Esophagus muscularis mucosa (tissue), 4 donors: ENCODE measurements at regions of chr7 and their contacts with region 1.

Region 1: DNA sequence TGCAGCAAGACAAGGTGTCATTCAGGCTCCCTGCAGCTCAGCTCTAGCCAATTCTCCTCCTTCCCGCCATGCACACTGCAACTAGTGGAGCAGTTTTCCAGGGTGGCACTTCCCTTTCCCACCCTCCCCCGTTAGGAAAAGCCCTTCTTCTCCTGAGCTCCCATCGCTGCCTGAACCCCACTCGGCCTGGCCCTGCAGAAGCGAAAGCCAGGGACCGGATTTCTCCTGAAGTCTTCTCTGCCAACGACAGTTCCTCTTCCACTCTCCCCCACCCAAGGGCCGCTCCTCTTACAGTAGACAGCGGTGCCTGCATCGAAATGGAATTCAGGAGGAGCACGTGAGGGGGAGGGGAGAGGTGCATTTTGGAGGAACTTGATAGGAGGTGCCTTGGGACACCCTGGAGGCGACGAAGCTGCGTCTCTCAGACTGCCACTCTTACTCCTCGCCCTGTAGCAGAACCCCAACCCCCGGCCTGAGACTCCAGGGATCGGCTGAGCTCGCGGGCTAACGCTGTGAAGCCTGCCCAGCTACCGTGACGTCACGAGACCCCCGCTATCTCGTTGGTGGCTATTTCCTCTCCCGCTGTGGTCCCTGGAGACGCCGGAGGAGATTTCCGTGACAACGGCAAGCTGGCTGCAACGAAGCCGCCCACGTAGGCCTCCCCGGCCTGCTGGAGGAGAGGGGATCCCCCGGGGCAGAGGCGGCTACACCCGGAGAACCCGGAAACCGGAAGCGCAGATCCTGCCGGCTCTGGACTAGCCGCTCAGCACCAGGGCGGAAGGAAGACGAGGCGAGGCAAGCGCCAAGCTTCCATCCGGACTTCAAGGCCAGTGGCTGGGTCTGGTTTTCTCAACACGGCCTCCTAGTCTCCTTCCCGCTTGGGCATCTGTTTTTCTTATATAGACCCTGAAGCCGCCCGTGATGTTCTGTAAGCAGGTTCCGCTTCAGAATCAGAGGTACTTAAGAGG is 109.7 kb downstream of the RALA start:
- DNase-seq: peak; percentile 97
- H3K4me3 ChIP-seq: peak overlapping the region; percentile 50 to 75 (median 68)
- H3K27ac ChIP-seq: peak overlapping the region; percentile 68 to 75 (median 71)
- H3K4me1 ChIP-seq: peaks cover 21 to 34% (median 26%) of the 10 kb centered on the region in 4 donors
- H3K27me3 ChIP-seq: no peaks in the 10 kb centered on the region
- CTCF ChIP-seq: no peak
- EP300 ChIP-seq: no peak
- POLR2A ChIP-seq: no peak

Region 2: DNA sequence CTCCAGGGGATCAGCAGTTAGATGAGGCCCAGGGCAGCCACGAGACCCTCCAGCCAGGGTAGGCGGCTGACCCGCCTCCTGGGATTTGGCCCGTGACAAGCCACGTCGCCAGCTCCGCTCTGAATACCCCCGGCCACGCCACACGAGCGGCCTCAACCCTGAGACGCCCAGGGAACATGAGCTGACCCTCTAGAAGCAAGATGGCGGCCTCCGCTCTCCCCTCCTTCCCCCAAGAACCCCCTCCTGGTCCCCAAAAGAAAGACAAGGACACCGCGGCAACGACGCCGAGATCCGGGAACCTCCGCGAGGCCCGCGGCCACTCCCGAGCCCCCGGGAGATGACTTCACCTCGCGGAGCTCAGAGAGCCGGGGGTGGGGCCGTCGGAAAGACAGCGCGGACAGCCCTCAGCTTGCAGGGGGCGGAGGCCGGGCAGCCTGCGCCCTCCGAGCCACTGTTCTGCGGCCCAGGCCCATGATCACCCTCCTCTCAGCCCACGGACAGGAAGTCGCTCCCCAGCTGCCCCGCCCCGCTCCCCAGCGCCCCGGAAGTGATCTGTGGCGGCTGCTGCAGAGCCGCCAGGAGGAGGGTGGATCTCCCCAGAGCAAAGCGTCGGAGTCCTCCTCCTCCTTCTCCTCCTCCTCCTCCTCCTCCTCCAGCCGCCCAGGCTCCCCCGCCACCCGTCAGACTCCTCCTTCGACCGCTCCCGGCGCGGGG is 109.9 kb before region 1 on chr7 and contains the start of gene RALA:
- intact Hi-C with region 1: loop called (anchors 2 kb)
- DNase-seq: peak; percentile 95
- H3K4me3 ChIP-seq: peak within 1 kb of the TSS; percentile 83 to 98 (median 92)
- H3K27ac ChIP-seq: peak within 1 kb of the TSS; percentile 87 to 90 (median 88)
- H3K4me1 ChIP-seq: peaks cover 28 to 44% (median 40%) of the 10 kb centered on the region in 4 donors
- H3K27me3 ChIP-seq: no peaks in the 10 kb centered on the region
- CTCF ChIP-seq: no peak
- EP300 ChIP-seq: no peak
- POLR2A ChIP-seq: no peak
- total RNA-seq, gene RALA: 12.3 to 25.1 (median 19.6) TPM

Region 3: GRCh38 chr7:39758234-39758970 is 25.3 kb after region 1 on chr7:
- intact Hi-C with region 1: no loop called
- DNase-seq: no peak
- H3K4me3 ChIP-seq: no peak overlapping the region
- H3K27ac ChIP-seq: peak overlapping the region in 1 of 4 donors; percentile 14
- H3K4me1 ChIP-seq: peaks cover 10 to 30% (median 29%) of the 10 kb centered on the region in 4 donors
- H3K27me3 ChIP-seq: no peaks in the 10 kb centered on the region
- CTCF ChIP-seq: no peak
- EP300 ChIP-seq: no peak
- POLR2A ChIP-seq: no peak

Region 4: DNA sequence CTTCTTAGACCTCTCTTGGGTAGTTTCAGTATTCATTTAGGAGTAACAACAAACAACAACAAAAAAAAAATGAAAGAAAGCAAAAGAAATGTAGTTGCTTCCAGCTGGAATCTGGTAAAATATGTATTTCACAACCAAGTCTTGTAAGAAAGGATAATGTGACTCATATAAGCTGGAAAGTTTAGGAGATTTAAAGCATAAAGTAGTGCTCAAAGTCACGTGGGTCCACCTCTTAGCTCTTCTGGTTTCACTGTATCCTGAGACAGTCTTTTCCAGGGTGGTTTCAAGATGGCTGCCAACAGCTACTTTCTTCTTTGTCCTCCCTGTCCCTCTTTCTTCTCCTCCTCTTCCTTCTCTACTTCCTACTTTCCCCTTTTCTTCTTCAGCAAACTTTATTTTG is 147.4 kb after region 1 on chr7:
- intact Hi-C with region 1: no loop called
- DNase-seq: no peak
- H3K4me3 ChIP-seq: no peak overlapping the region
- H3K27ac ChIP-seq: no peak overlapping the region
- H3K4me1 ChIP-seq: no peaks in the 10 kb centered on the region
- H3K27me3 ChIP-seq: peaks cover 0 to 5% (median 0%) of the 10 kb centered on the region in 4 donors
- CTCF ChIP-seq: no peak
- EP300 ChIP-seq: no peak
- POLR2A ChIP-seq: no peak